CD8-positive, alpha-beta T cell (primary cell): ENCODE measurements at regions of chr3 and their contacts with region 1.

Region 1: GRCh38 chr3:27712136-27713077 is 9.7 kb downstream of the EOMES start:
- DNase-seq: peak; percentile 61 to 91 (median 79)
- ATAC-seq: peak; percentile 86
- H3K4me3 ChIP-seq: peak overlapping the region; percentile 73 to 94
- H3K4me3 Mint-ChIP-seq: peak overlapping the region; percentile 95
- H3K27ac ChIP-seq: peak overlapping the region; percentile 44 to 74
- H3K27ac Mint-ChIP-seq: peak overlapping the region; percentile 87
- H3K4me1 ChIP-seq: peaks cover 20% of the 10 kb centered on the region
- H3K4me1 Mint-ChIP-seq: peaks cover 28% of the 10 kb centered on the region
- H3K27me3 ChIP-seq: peaks cover 4 to 11% of the 10 kb centered on the region in 2 experiments
- H3K27me3 Mint-ChIP-seq: peaks cover 18% of the 10 kb centered on the region
- CTCF ChIP-seq: peak; percentile 67

Region 2: GRCh38 chr3:25962249-25962648 is 1750.2 kb before region 1 on chr3:
- CTCF ChIA-PET with region 1: no interaction called
- POLR2A ChIA-PET with region 1: no interaction called
- intact Hi-C with region 1: no loop called
- DNase-seq: no peak
- ATAC-seq: no peak
- H3K4me3 ChIP-seq: no peak overlapping the region
- H3K4me3 Mint-ChIP-seq: no peak overlapping the region
- H3K27ac ChIP-seq: no peak overlapping the region
- H3K27ac Mint-ChIP-seq: no peak overlapping the region
- H3K4me1 ChIP-seq: no peaks in the 10 kb centered on the region
- H3K4me1 Mint-ChIP-seq: no peaks in the 10 kb centered on the region
- H3K27me3 ChIP-seq: no peaks in the 10 kb centered on the region
- H3K27me3 Mint-ChIP-seq: no peaks in the 10 kb centered on the region
- CTCF ChIP-seq: no peak

Region 3: GRCh38 chr3:27681245-27681748 is 31.1 kb before region 1 on chr3:
- CTCF ChIA-PET with region 1: interaction called, 15 read pairs
- POLR2A ChIA-PET with region 1: interaction called, 3 read pairs
- intact Hi-C with region 1: no loop called
- DNase-seq: peak in 6 of 9 experiments; percentile 22 to 86 (median 44)
- ATAC-seq: peak; percentile 92
- H3K4me3 ChIP-seq: no peak overlapping the region
- H3K4me3 Mint-ChIP-seq: peak overlapping the region; percentile 63
- H3K27ac ChIP-seq: no peak overlapping the region
- H3K27ac Mint-ChIP-seq: no peak overlapping the region
- H3K4me1 ChIP-seq: peaks cover 4% of the 10 kb centered on the region
- H3K4me1 Mint-ChIP-seq: peaks cover 8% of the 10 kb centered on the region
- H3K27me3 ChIP-seq: no peaks in the 10 kb centered on the region
- H3K27me3 Mint-ChIP-seq: peaks cover 5% of the 10 kb centered on the region
- CTCF ChIP-seq: peak; percentile 82

Region 4: GRCh38 chr3:27888562-27888961 is 176.2 kb after region 1 on chr3:
- CTCF ChIA-PET with region 1: interaction called, 10 read pairs
- POLR2A ChIA-PET with region 1: no interaction called
- intact Hi-C with region 1: no loop called
- DNase-seq: peak in 2 of 9 experiments; percentile 10 to 20
- ATAC-seq: no peak
- H3K4me3 ChIP-seq: no peak overlapping the region
- H3K4me3 Mint-ChIP-seq: no peak overlapping the region
- H3K27ac ChIP-seq: no peak overlapping the region
- H3K27ac Mint-ChIP-seq: no peak overlapping the region
- H3K4me1 ChIP-seq: peaks cover 8% of the 10 kb centered on the region
- H3K4me1 Mint-ChIP-seq: peaks cover 18% of the 10 kb centered on the region
- H3K27me3 ChIP-seq: no peaks in the 10 kb centered on the region
- H3K27me3 Mint-ChIP-seq: no peaks in the 10 kb centered on the region
- CTCF ChIP-seq: no peak

Region 5: GRCh38 chr3:28286595-28286994 is 574.2 kb after region 1 on chr3:
- CTCF ChIA-PET with region 1: interaction called, 56 read pairs
- POLR2A ChIA-PET with region 1: interaction called, 3 read pairs
- intact Hi-C with region 1: loop called (anchors 1 kb)
- DNase-seq: peak in 2 of 9 experiments; percentile 60 to 71
- ATAC-seq: peak; percentile 83
- H3K4me3 ChIP-seq: peak overlapping the region in 1 of 2 experiments; percentile 21
- H3K4me3 Mint-ChIP-seq: no peak overlapping the region
- H3K27ac ChIP-seq: peak overlapping the region in 1 of 2 experiments; percentile 36
- H3K27ac Mint-ChIP-seq: no peak overlapping the region
- H3K4me1 ChIP-seq: no peaks in the 10 kb centered on the region
- H3K4me1 Mint-ChIP-seq: peaks cover 34% of the 10 kb centered on the region
- H3K27me3 ChIP-seq: no peaks in the 10 kb centered on the region
- H3K27me3 Mint-ChIP-seq: no peaks in the 10 kb centered on the region
- CTCF ChIP-seq: peak; percentile 60

Region 6: GRCh38 chr3:28317438-28318022 is 605.1 kb after region 1 on chr3:
- CTCF ChIA-PET with region 1: interaction called, 130 read pairs
- POLR2A ChIA-PET with region 1: interaction called, 10 read pairs
- intact Hi-C with region 1: no loop called
- DNase-seq: peak in 5 of 9 experiments; percentile 9 to 83 (median 44)
- ATAC-seq: peak; percentile 99
- H3K4me3 ChIP-seq: no peak overlapping the region
- H3K4me3 Mint-ChIP-seq: no peak overlapping the region
- H3K27ac ChIP-seq: no peak overlapping the region
- H3K27ac Mint-ChIP-seq: no peak overlapping the region
- H3K4me1 ChIP-seq: no peaks in the 10 kb centered on the region
- H3K4me1 Mint-ChIP-seq: peaks cover 24% of the 10 kb centered on the region
- H3K27me3 ChIP-seq: no peaks in the 10 kb centered on the region
- H3K27me3 Mint-ChIP-seq: no peaks in the 10 kb centered on the region
- CTCF ChIP-seq: peak; percentile 91

Region 7: GRCh38 chr3:28343144-28343543 is 630.7 kb after region 1 on chr3:
- CTCF ChIA-PET with region 1: interaction called, 25 read pairs
- POLR2A ChIA-PET with region 1: interaction called, 9 read pairs
- intact Hi-C with region 1: loop called in 1 of 2 experiments (anchors 5 kb)
- DNase-seq: no peak
- ATAC-seq: no peak
- H3K4me3 ChIP-seq: no peak overlapping the region
- H3K4me3 Mint-ChIP-seq: no peak overlapping the region
- H3K27ac ChIP-seq: no peak overlapping the region
- H3K27ac Mint-ChIP-seq: no peak overlapping the region
- H3K4me1 ChIP-seq: peaks cover 25% of the 10 kb centered on the region
- H3K4me1 Mint-ChIP-seq: peaks cover 55% of the 10 kb centered on the region
- H3K27me3 ChIP-seq: no peaks in the 10 kb centered on the region
- H3K27me3 Mint-ChIP-seq: no peaks in the 10 kb centered on the region
- CTCF ChIP-seq: no peak